ENCODE measurements at regions of chr11 and their contacts with region 1.

Region 1: DNA sequence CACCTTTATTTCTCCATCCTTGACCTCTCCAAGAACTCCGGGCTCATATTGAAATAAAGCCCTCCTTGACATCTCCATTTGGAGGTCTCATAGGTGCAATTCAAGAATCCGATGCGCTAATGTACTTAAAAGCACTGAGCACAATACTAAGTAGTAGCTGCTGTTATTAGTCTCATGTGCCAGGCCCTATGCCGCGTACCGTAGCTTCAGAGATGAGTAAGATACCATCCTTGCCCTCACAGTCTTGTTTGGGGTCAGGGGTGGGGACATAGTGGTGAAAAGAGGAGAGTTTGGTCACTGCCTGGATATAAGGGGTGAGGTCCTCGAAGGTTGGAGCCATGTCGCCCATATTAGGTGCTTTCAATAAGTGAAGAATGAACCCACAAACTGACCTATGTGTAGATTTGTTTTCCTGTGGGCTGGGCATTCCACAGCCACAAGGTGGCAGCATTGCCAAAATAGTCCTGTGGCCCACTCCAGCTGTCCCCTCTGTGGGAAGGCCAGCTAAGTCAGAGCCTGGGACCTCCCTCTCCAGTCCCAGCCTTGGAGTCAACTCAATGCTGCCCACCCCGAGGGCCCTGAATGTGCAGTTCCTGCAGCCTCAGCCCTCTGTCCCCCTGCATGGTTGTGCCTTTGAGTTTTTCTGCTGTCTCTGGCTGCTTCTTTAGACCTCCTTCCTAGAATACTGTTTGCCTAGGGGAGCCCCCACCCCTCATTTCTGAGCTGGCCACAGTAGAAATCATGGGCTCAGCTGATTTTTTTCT is 6.5 kb downstream of the DCPS start:
- DNase-seq: peak; percentile 76
- H3K4me3 Mint-ChIP-seq: no peak overlapping the region
- H3K27ac Mint-ChIP-seq: no peak overlapping the region
- H3K4me1 Mint-ChIP-seq: peaks cover 11% of the 10 kb centered on the region
- H3K27me3 Mint-ChIP-seq: no peaks in the 10 kb centered on the region
- CTCF ChIP-seq: peak; percentile 65

Region 2: GRCh38 chr11:126062679-126063506 is 247.5 kb before region 1 on chr11 and contains the start of gene CDON:
- CTCF ChIA-PET with region 1: no interaction called
- intact Hi-C with region 1: no loop called
- DNase-seq: peak; percentile 90
- H3K4me3 Mint-ChIP-seq: peak within 1 kb of the TSS; percentile 81
- H3K27ac Mint-ChIP-seq: peak within 1 kb of the TSS; percentile 96
- H3K4me1 Mint-ChIP-seq: peaks cover 8% of the 10 kb centered on the region
- H3K27me3 Mint-ChIP-seq: no peaks in the 10 kb centered on the region
- CTCF ChIP-seq: no peak
- total RNA-seq, gene CDON: 10.6 and 14.8 TPM in 2 replicates

Region 3: DNA sequence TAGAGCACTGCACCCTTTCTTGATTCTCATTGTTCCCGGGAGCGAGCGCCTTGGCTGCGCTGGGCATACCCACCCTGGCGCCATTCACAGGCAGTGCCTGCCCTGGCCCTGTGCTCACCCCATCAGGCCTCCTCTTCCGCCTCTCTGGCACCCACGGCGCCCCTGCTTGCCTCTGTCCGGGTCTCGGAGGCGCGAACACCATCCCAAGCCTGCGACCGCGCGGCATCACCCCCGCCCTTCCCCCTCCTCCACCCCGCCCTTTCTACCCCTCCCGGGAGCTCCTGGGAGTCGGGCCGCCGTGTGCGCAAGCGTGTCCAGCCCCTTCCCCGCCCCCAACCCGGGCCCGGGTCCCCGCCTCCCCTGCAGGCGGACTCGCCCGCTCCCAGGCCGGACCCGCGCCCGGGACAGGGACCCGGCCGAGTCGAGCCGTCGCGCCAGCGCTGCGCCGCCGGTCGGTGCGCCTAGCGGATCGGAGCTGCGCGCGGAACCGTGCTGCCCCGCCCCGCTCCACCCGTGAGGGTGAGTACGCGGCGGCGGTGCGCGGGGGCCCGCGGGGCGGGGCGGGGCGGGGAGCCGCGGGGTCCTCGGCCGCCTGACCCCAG is 45.0 kb after region 1 on chr11 and contains the start of gene ST3GAL4:
- CTCF ChIA-PET with region 1: interaction called, 3 read pairs
- intact Hi-C with region 1: loop called (anchors 5 kb)
- DNase-seq: peak; percentile 73
- H3K4me3 Mint-ChIP-seq: peak within 1 kb of the TSS; percentile 89
- H3K27ac Mint-ChIP-seq: peak within 1 kb of the TSS; percentile 73
- H3K4me1 Mint-ChIP-seq: peaks cover 24% of the 10 kb centered on the region
- H3K27me3 Mint-ChIP-seq: no peaks in the 10 kb centered on the region
- CTCF ChIP-seq: no peak
- total RNA-seq, gene ST3GAL4: 22.1 and 27.9 TPM in 2 replicates

Region 4: DNA sequence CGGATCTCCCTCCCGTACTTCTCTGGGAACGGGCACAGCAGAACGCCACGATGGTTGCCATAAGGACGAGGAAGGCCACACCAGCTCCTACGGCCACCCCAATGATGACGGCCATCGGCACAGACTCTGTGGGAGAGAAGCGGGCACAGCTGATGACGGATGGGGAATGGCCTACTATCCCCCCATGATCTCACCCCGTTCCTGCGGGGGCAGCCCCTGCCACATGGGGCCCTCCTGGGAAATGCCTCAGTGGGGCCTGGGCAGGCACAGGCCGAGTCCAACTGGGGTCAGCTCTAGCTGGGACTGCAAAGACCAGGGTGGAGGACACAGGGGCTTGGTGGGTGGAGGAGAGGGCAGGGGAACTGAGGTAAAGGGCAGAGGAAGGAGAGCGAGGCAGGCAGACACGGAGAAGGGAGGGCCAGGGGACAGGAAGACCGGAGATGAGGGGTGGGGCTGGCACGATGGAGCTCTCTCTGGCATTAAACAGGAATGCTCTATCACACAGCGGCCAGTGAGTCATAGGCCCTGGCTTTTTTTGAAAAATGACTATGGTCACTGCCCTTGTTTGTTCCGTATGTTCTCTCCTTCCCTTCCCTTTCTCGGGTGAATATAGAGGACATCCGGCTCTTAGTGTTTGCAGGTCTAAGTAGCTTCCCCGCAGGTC is 121.1 kb after region 1 on chr11:
- CTCF ChIA-PET with region 1: interaction called, 5 read pairs
- intact Hi-C with region 1: loop called (anchors 5 kb)
- DNase-seq: peak; percentile 49
- H3K4me3 Mint-ChIP-seq: no peak overlapping the region
- H3K27ac Mint-ChIP-seq: no peak overlapping the region
- H3K4me1 Mint-ChIP-seq: peaks cover 23% of the 10 kb centered on the region
- H3K27me3 Mint-ChIP-seq: no peaks in the 10 kb centered on the region
- CTCF ChIP-seq: no peak

Region 5: GRCh38 chr11:126480410-126481302 is 170.2 kb after region 1 on chr11:
- CTCF ChIA-PET with region 1: interaction called, 35 read pairs
- intact Hi-C with region 1: loop called (anchors 1 kb)
- DNase-seq: peak; percentile 62
- H3K4me3 Mint-ChIP-seq: no peak overlapping the region
- H3K27ac Mint-ChIP-seq: peak overlapping the region; percentile 71
- H3K4me1 Mint-ChIP-seq: peaks cover 17% of the 10 kb centered on the region
- H3K27me3 Mint-ChIP-seq: no peaks in the 10 kb centered on the region
- CTCF ChIP-seq: peak; percentile 62